ENCODE measurements at regions of chr17 and their contacts with region 1.

Region 1: GRCh38 chr17:61389670-61390478 is 9.8 kb upstream of the TBX2 start:
- DNase-seq: no peak
- H3K4me3 ChIP-seq: no peak overlapping the region
- H3K27ac ChIP-seq: no peak overlapping the region
- H3K4me1 ChIP-seq: peaks cover 22% of the 10 kb centered on the region
- H3K27me3 ChIP-seq: no peaks in the 10 kb centered on the region
- CTCF ChIP-seq: peak; percentile 70 to 79 (median 72)
- POLR2A ChIP-seq: no peak

Region 2: DNA sequence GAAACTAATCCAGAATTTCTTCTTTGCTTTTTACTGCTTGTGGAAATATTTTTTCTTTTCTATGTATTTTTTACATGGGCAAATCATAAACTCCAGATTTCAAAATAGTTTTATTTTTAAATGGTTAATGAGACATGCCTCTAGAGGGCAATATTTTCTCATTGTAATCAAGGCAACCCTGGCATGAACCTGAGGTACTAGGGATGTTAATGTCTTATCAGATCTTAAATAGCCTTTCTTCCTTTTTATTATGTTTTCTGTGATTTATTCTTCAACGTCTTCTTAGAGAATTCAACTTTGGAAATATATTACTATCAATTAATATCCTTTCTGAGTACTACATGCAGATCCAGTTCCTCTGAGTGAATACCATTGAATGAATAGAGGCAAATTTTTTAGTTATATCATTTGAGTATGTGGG is 387.5 kb before region 1 on chr17:
- intact Hi-C with region 1: loop called (anchors 5 kb)
- DNase-seq: no peak
- H3K4me3 ChIP-seq: no peak overlapping the region
- H3K27ac ChIP-seq: no peak overlapping the region
- H3K4me1 ChIP-seq: no peaks in the 10 kb centered on the region
- H3K27me3 ChIP-seq: no peaks in the 10 kb centered on the region
- CTCF ChIP-seq: peak in 2 of 3 experiments; percentile 25 to 60
- POLR2A ChIP-seq: no peak

Region 3: DNA sequence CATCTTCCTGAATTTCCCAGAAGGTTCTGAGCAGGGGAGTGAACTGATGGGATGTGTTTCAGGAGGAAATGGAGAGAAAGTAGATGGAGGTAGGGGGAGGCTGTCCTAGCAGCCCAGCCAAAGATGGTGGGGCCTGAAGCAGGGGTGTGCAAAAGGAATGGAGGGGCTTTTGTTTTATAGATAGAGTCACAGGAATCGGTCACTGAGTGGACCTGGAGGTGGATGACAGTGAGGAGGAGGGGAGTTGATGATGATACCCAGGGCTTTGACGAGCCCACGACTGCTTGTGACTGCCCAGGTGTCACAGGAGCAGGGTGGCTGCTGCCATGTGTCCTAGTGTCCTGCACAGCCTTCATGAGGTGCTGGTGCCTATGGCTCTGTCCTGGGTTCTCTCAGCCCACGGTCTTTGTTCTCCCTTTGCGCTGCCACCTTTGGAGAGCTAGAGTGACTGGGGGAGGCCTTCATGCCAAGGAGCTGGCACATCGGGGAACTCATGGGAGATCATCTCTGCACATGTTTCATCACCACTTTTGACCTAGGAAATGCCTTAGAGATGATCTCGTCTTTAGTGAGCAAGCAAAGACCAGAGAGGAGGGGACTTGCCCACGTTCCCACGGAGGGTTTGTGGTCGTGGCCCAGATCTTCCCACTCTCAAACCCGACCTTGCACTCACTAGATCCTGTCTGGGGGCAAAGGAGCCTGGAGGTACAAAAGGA is 85.7 kb after region 1 on chr17:
- intact Hi-C with region 1: no loop called
- DNase-seq: no peak
- H3K4me3 ChIP-seq: no peak overlapping the region
- H3K27ac ChIP-seq: no peak overlapping the region
- H3K4me1 ChIP-seq: no peaks in the 10 kb centered on the region
- H3K27me3 ChIP-seq: no peaks in the 10 kb centered on the region
- CTCF ChIP-seq: no peak
- POLR2A ChIP-seq: no peak

Region 4: DNA sequence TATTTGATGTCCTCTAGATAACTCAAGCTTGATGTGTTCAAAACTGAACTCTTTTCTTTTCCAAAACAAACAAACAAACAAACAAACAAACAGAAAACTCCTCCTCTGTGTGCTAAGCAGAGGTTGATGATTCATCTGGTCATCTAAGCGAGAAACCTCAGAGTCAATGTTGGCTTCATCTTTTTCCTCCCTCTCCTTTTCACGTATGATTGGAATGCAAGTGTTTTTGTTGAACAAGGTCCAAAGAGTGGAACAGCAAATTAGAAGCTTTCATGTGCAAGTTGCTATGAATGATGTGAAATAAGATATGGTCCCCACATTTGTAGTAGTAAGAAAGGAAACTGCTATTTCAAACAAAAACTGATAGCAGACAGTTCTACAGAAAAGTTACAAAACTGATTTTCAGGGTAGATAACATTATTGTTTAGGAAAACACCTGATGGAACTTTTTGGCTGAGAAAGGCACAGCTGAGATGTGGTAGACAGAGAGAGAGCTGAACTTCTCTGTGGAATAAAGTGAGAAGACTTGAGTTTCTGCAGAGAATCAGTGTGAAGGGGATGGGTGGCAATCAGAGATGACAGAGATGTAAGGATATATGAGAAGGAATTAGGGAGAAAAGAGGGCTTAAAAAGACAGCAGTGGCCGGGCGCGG is 114.9 kb after region 1 on chr17:
- intact Hi-C with region 1: no loop called
- DNase-seq: no peak
- H3K4me3 ChIP-seq: no peak overlapping the region
- H3K27ac ChIP-seq: no peak overlapping the region
- H3K4me1 ChIP-seq: no peaks in the 10 kb centered on the region
- H3K27me3 ChIP-seq: no peaks in the 10 kb centered on the region
- CTCF ChIP-seq: no peak
- POLR2A ChIP-seq: no peak